ENCODE measurements at regions of chr1 and their contacts with region 1.

Region 1: DNA sequence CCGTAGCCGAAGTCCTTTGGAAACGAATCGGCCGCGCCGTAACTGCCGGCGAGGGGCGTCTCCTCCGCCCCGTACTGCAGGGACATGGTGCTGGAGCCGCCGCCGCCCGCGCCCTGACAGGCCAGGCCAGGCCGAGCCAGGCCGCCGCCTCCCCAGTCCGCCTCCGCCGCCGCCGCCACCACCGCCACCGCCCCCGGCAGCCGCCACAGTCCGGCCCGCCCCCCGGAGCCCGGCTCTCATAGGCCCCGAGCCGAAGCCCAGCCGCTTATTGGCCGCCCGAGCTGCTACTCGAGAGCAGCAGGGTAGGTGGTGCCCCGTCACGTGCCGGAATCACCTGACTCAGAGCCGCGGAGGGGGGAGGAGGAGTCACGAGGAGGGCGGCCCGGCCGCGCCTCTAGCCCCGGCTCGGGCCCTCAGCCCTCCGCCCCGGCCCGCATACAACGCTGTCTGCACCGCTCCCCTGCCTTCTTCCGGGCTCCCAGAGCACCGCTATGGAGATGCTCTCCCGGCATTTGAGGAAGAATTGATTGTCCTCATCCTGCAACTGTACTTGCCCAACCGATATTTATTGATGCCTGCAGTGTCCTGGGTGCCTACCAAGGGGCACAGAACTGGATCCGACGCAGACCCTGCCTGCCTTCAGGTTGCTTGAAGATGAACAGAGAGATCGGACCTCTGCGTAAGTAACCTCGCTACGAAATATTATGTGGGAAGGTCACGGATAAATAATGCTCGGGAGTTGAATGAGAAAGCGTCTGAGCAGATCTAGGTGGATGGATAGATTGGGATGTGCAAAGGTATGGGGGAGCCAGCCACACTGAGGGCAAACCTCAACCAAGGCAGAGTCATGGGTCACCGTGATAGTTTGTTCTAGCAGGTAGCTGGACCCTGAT is at the start of gene RRAGC:
- DNase-seq: peak; percentile 98
- H3K4me3 Mint-ChIP-seq: peak within 1 kb of the TSS; percentile 89
- H3K27ac Mint-ChIP-seq: peak within 1 kb of the TSS; percentile 74
- H3K4me1 Mint-ChIP-seq: peaks cover 41% of the 10 kb centered on the region
- H3K27me3 Mint-ChIP-seq: no peaks in the 10 kb centered on the region
- total RNA-seq, gene RRAGC: 12.9 and 13.4 TPM in 2 replicates

Region 2: DNA sequence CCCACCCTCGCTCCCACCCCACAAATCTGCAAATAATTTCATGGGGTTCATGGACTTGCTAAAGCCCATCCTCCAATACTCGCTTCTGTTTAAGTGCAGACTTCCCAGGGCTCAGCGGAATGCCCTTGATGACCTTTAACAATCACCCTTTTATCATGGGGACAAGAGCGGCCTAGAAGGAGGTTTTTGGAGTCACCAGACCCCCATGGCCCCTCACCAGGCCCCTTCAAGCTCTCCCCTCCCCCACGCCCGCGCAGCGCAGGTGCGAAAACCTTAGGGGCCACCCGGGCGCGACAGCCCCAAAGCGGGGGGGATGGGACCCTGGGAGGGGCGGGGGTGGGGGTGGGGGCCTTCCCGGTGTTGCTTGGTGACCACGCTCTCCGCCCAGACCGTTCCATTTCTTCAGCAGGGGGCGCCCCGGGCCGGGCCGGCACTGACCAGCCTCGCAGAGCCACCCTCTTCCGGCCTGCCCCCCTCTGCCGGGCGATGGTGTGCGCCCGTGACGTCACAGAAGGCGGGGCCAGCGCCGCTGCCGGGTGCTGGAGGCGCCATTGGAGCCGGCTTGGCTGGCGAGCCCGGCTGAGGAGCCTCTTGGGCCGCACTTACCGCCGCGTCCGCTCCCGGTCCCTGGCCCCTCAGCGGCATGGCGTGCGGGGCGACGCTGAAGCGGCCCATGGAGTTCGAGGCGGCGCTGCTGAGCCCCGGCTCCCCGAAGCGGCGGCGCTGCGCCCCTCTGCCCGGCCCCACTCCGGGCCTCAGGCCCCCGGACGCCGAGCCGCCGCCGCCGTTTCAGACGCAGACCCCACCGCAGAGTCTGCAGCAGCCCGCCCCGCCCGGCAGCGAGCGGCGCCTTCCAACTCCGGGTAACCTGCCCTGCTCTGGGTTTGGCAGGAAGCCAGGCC is 131.2 kb after region 1 on chr1 and contains the start of gene AKIRIN1:
- intact Hi-C with region 1: loop called (anchors 1 kb)
- DNase-seq: peak; percentile 97
- H3K4me3 Mint-ChIP-seq: peak within 1 kb of the TSS; percentile 90
- H3K27ac Mint-ChIP-seq: peak within 1 kb of the TSS; percentile 83
- H3K4me1 Mint-ChIP-seq: peaks cover 34% of the 10 kb centered on the region
- H3K27me3 Mint-ChIP-seq: no peaks in the 10 kb centered on the region
- total RNA-seq, gene AKIRIN1: 78.1 and 78.5 TPM in 2 replicates

Region 3: GRCh38 chr1:39091845-39092645 is 232.2 kb after region 1 on chr1:
- intact Hi-C with region 1: loop called (anchors 1 kb)
- DNase-seq: peak; percentile 19
- H3K4me3 Mint-ChIP-seq: no peak overlapping the region
- H3K27ac Mint-ChIP-seq: no peak overlapping the region
- H3K4me1 Mint-ChIP-seq: peaks cover 9% of the 10 kb centered on the region
- H3K27me3 Mint-ChIP-seq: peaks cover 10% of the 10 kb centered on the region

Region 4: GRCh38 chr1:39189592-39190041 is 329.8 kb after region 1 on chr1:
- intact Hi-C with region 1: loop called (anchors 5 kb)
- DNase-seq: no peak
- H3K4me3 Mint-ChIP-seq: peak overlapping the region; percentile 37
- H3K27ac Mint-ChIP-seq: peak overlapping the region; percentile 95
- H3K4me1 Mint-ChIP-seq: peaks cover 87% of the 10 kb centered on the region
- H3K27me3 Mint-ChIP-seq: no peaks in the 10 kb centered on the region